Lower leg skin (tissue), 4 donors: ENCODE measurements at regions of chr9 and their contacts with region 1.

Region 1: DNA sequence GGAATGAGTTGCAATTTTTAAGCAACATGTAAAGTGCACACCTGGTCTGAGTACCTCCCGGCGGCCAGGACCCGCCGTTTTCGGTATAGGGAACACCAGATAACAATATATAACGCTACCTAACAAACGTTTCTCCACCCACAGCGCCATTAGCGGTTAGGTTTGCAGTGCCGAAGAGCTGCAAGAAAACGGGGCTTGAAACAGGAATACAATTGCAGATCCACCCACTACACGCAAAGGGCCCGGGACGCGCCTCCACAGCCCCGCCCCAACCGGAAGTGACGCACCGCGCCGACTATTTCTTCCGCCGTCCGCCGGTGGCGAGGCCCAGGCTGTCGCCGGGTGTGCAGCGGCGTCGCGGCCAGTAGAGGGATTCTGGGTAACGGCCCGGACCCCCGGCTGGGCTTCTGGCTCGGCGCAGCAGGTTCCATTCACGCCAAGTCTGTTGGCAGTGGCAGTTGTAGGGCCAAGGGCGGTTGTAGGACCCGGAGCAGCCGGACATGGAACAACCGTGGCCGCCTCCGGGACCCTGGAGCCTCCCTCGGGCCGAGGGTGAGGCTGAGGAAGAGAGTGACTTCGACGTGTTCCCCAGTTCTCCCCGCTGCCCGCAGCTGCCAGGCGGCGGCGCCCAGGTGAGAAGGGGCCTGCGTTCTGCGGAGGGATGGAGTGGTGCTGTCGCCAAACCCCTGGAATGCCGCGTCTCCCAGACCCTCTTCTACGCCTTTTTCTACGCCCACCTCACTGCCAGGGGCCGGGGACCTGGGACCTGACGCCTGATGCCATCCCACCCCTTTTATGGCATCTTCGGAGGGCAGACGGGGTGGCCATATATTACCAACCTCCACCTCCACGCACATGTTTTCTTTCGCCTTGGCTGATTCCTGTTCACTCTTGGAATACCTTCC is at the start of gene CDC37L1:
- DNase-seq: peak; percentile 97 to 100
- H3K4me3 ChIP-seq: peak within 1 kb of the TSS; percentile 68
- CTCF ChIP-seq: peak in 1 of 3 donors; percentile 74
- POLR2A ChIP-seq: peak in 1 of 2 donors; percentile 92
- total RNA-seq, gene CDC37L1: 15.5 to 32.5 (median 25.8) TPM

Region 2: DNA sequence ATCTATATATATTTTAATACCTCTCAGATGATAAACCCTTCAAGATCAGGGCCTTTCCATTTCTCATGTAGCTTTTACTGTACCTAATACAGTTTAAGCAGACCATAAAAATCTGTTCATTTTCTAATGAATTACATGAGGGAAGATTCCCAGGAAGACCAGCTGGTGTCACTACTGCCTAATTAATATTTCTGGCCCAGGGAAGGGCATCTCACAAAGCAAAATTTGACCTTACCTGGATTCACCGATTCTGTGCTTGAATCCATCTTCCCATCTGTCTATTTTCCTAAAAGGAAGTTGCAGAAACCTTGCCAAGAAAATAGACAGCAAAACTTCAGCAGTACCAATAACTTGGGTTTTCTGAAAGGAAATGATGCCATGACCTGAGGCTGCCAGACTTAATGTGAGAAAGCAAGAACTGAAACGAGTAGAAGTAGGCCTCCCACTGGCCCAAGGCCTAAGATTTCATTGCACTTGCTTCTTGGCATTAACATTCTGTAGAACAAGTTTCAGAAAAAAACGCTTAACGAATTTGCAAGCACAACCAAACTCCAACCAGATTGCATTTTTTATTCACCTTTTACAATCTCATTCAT is 296.7 kb before region 1 on chr9:
- intact Hi-C with region 1: no loop called
- DNase-seq: no peak
- H3K4me3 ChIP-seq: no peak overlapping the region
- CTCF ChIP-seq: no peak
- POLR2A ChIP-seq: no peak

Region 3: GRCh38 chr9:4739587-4740387 is 60.3 kb after region 1 on chr9:
- intact Hi-C with region 1: loop called (anchors 10 kb)
- DNase-seq: no peak
- H3K4me3 ChIP-seq: peak overlapping the region; percentile 58
- CTCF ChIP-seq: no peak
- POLR2A ChIP-seq: no peak